ENCODE measurements at regions of chr1 and their contacts with region 1.

Region 1: GRCh38 chr1:224434691-224435317 is at the start of gene WDR26:
- DNase-seq: peak; percentile 96
- H3K4me3 Mint-ChIP-seq: peak within 1 kb of the TSS; percentile 96
- H3K27ac Mint-ChIP-seq: peak within 1 kb of the TSS; percentile 97
- H3K4me1 Mint-ChIP-seq: peaks cover 43% of the 10 kb centered on the region
- H3K27me3 Mint-ChIP-seq: no peaks in the 10 kb centered on the region
- total RNA-seq, gene WDR26: 81.0 and 90.9 TPM in 2 replicates

Region 2: DNA sequence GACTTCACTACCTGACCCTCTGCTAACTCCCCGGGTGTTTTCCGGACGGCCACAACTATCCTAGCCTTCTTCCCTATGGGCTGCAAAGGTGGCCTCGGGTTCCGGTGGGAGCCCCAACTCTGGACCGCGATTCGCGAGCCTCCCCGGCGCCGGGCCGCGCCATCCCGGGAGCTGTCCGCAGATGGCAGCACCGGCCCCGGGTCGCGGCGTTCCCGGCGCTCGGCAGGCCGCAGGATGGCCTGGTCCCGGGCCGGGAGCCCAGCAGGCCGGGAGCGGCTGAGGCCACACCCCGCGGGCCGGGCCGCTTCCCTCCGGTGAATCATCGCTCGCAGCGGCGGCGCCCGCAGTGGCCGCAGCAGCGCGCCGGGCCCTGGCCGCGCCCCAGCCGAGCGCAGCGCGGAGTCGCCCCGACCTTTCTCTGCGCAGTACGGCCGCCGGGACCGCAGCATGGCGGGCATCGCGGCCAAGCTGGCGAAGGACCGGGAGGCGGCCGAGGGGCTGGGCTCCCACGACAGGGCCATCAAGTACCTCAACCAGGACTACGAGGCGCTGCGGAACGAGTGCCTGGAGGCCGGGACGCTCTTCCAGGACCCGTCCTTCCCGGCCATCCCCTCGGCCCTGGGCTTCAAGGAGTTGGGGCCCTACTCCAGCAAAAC is 722.5 kb before region 1 on chr1 and contains the start of gene CAPN2:
- intact Hi-C with region 1: loop called (anchors 10 kb)
- DNase-seq: peak; percentile 90
- H3K4me3 Mint-ChIP-seq: peak within 1 kb of the TSS; percentile 96
- H3K27ac Mint-ChIP-seq: peak within 1 kb of the TSS; percentile 87
- H3K4me1 Mint-ChIP-seq: peaks cover 66% of the 10 kb centered on the region
- H3K27me3 Mint-ChIP-seq: peaks cover 7% of the 10 kb centered on the region
- total RNA-seq, gene CAPN2: 69.6 and 73.1 TPM in 2 replicates

Region 3: GRCh38 chr1:223845810-223846682 is 588.8 kb before region 1 on chr1 and contains the start of gene TP53BP2:
- intact Hi-C with region 1: loop called (anchors 5 kb)
- DNase-seq: peak; percentile 96
- H3K4me3 Mint-ChIP-seq: peak within 1 kb of the TSS; percentile 91
- H3K27ac Mint-ChIP-seq: peak within 1 kb of the TSS; percentile 97
- H3K4me1 Mint-ChIP-seq: peaks cover 31% of the 10 kb centered on the region
- H3K27me3 Mint-ChIP-seq: peaks cover 5% of the 10 kb centered on the region
- total RNA-seq, gene TP53BP2: 37.1 and 47.7 TPM in 2 replicates

Region 4: GRCh38 chr1:224182866-224183590 is 251.8 kb before region 1 on chr1 and contains the start of gene DEGS1:
- intact Hi-C with region 1: loop called (anchors 5 kb)
- DNase-seq: peak; percentile 95
- H3K4me3 Mint-ChIP-seq: peak within 1 kb of the TSS; percentile 96
- H3K27ac Mint-ChIP-seq: peak within 1 kb of the TSS; percentile 97
- H3K4me1 Mint-ChIP-seq: peaks cover 45% of the 10 kb centered on the region
- H3K27me3 Mint-ChIP-seq: peaks cover 3% of the 10 kb centered on the region
- total RNA-seq, gene DEGS1: 51.8 and 56.3 TPM in 2 replicates

Region 5: GRCh38 chr1:224356685-224357625 is 77.8 kb before region 1 on chr1 and contains the start of gene CNIH4:
- intact Hi-C with region 1: loop called (anchors 1 kb)
- DNase-seq: peak; percentile 97
- H3K4me3 Mint-ChIP-seq: peak within 1 kb of the TSS; percentile 80
- H3K27ac Mint-ChIP-seq: peak within 1 kb of the TSS; percentile 92
- H3K4me1 Mint-ChIP-seq: peaks cover 38% of the 10 kb centered on the region
- H3K27me3 Mint-ChIP-seq: no peaks in the 10 kb centered on the region
- total RNA-seq, gene CNIH4: 77.2 and 78.1 TPM in 2 replicates

Region 6: GRCh38 chr1:224457782-224458144 is 23.0 kb after region 1 on chr1:
- intact Hi-C with region 1: loop called (anchors 2 kb)
- DNase-seq: no peak
- H3K4me3 Mint-ChIP-seq: peak overlapping the region; percentile 59
- H3K27ac Mint-ChIP-seq: no peak overlapping the region
- H3K4me1 Mint-ChIP-seq: peaks cover 27% of the 10 kb centered on the region
- H3K27me3 Mint-ChIP-seq: no peaks in the 10 kb centered on the region

Region 7: DNA sequence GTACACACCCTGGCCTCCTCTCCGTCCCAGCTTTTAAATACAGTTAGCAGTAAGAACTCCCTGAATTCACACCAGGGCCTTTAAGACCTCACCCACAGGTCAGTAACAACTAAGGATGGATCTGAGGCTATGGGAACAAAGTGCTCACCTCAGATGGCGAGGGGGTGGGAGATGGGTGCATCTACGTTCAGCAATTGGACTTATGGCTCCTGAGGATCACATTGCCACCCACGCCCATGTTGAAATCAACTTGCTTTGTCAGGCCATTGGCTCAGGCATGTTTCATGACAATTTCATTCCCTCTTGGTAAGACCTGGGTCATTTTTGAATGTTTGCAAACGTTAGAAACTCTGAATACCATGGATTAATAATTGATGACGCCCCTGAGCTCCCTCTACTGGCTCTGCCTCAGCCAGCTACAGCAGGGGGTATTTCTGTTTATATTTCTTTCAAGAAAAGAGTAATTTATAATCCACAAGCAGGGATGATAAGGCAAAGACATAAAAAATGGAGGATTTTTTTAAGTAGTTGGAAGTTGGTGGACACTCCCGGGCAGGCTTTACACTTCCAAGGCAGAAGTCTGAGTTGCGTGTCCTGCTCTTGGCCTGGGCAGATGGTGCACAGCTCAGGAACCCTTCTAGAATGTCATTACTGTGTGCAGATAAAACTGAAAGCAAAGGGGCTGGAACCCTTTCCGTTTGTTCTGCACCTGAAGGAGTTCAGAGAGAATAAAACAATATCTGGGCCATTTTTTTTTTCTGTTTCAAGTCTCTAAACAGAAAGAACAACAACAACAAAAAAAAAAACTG is 1006.7 kb after region 1 on chr1:
- intact Hi-C with region 1: loop called (anchors 10 kb)
- DNase-seq: no peak
- H3K4me3 Mint-ChIP-seq: peak overlapping the region; percentile 61
- H3K27ac Mint-ChIP-seq: peak overlapping the region; percentile 76
- H3K4me1 Mint-ChIP-seq: peaks cover 60% of the 10 kb centered on the region
- H3K27me3 Mint-ChIP-seq: peaks cover 2% of the 10 kb centered on the region